ENCODE measurements at regions of chr1 and their contacts with region 1.

Region 1: DNA sequence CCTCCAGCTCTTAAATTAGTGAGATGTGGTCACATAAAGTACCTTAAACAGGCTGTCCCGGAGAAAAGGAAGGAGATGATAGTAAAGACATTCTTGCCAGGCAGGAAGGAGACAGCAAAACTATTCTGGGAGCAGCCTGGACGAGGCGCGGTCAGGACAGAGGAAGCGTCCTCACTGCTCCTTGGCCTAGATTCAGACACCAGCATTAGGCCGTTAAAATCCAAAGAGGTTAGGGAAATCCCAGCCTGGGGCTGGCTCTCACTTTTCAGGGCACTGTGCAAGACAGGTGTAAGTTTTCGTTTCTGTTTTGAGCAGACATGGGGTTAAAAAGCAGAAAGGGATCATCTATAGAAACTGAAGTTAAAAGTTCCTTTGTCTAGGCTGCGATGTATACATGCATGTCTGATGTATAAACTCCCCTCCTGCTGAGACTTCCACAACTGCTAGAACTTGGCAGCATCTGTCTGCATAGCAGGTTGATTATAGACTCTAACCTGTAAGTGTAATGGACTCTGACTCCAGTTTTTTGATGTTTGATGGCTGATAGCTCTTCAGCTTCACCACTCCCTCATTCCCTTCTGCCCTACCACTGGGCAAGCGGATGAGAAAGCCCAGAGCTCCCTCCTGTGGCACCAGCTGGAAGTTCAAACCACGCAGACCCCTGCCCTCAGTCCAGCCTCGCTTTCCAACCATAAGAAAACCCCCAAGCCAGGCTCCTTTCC is 21.5 kb downstream of the STPG1 start:
- DNase-seq: peak; percentile 80
- ATAC-seq: peak; percentile 73
- H3K4me3 Mint-ChIP-seq: peak overlapping the region; percentile 65
- H3K27ac Mint-ChIP-seq: peak overlapping the region; percentile 95
- H3K4me1 Mint-ChIP-seq: peaks cover 27% of the 10 kb centered on the region
- H3K27me3 Mint-ChIP-seq: no peaks in the 10 kb centered on the region

Region 2: GRCh38 chr1:24186993-24187805 is 204.8 kb before region 1 on chr1 and contains the start of gene IFNLR1:
- CTCF ChIA-PET with region 1: interaction called, 509 read pairs
- DNase-seq: peak; percentile 85
- ATAC-seq: peak; percentile 81
- H3K4me3 Mint-ChIP-seq: peak within 1 kb of the TSS; percentile 72
- H3K27ac Mint-ChIP-seq: peak within 1 kb of the TSS; percentile 65
- H3K4me1 Mint-ChIP-seq: peaks cover 49% of the 10 kb centered on the region
- H3K27me3 Mint-ChIP-seq: no peaks in the 10 kb centered on the region
- total RNA-seq, gene IFNLR1: 6.8 to 6.9 TPM

Region 3: GRCh38 chr1:24308365-24309015 is 83.6 kb before region 1 on chr1:
- CTCF ChIA-PET with region 1: interaction called, 15 read pairs
- DNase-seq: no peak
- ATAC-seq: no peak
- H3K4me3 Mint-ChIP-seq: no peak overlapping the region
- H3K27ac Mint-ChIP-seq: no peak overlapping the region
- H3K4me1 Mint-ChIP-seq: no peaks in the 10 kb centered on the region
- H3K27me3 Mint-ChIP-seq: peaks cover 32% of the 10 kb centered on the region

Region 4: DNA sequence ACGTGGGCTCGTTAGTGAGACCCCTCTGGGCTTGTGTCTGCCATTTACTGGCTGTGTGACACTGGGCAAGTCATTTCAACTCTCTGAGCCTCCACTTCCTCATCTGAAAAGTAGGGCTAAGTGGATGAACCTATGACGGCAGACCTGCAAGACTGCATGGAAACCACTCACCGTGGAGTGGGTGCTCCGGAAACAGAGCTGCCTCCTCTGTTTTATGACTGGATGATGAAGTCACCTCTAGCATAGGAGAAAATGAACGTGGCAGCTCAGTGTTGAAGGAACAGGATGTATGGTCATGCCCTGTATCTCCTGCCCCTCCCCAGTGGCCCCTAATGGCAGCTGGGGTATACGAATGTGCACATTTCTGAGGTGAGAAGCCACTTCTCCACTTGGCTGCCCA is 19.0 kb before region 1 on chr1:
- CTCF ChIA-PET with region 1: interaction called, 10 read pairs
- DNase-seq: no peak
- ATAC-seq: peak; percentile 53
- H3K4me3 Mint-ChIP-seq: no peak overlapping the region
- H3K27ac Mint-ChIP-seq: no peak overlapping the region
- H3K4me1 Mint-ChIP-seq: peaks cover 3% of the 10 kb centered on the region
- H3K27me3 Mint-ChIP-seq: no peaks in the 10 kb centered on the region

Region 5: DNA sequence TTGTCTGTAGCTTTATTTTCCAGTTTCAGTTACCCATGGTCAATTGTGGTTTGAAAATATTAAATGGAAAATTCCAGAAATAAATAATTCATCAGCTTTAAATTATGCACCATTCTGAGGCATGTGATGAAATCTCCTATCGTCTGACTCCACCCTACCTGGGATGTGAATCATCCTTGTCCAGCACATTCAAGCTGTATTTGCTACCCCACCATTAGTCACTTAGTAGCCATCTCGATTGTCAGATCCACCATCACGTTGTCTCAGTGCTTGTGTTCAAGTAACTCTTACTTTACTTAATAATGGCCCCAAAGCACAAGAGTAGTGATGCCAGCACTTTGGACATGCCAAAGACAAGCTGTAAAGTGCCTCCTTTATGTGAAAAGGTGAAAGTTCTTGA is 17.5 kb after region 1 on chr1:
- CTCF ChIA-PET with region 1: interaction called, 41 read pairs
- DNase-seq: peak; percentile 19
- ATAC-seq: no peak
- H3K4me3 Mint-ChIP-seq: no peak overlapping the region
- H3K27ac Mint-ChIP-seq: no peak overlapping the region
- H3K4me1 Mint-ChIP-seq: peaks cover 16% of the 10 kb centered on the region
- H3K27me3 Mint-ChIP-seq: no peaks in the 10 kb centered on the region

Region 6: DNA sequence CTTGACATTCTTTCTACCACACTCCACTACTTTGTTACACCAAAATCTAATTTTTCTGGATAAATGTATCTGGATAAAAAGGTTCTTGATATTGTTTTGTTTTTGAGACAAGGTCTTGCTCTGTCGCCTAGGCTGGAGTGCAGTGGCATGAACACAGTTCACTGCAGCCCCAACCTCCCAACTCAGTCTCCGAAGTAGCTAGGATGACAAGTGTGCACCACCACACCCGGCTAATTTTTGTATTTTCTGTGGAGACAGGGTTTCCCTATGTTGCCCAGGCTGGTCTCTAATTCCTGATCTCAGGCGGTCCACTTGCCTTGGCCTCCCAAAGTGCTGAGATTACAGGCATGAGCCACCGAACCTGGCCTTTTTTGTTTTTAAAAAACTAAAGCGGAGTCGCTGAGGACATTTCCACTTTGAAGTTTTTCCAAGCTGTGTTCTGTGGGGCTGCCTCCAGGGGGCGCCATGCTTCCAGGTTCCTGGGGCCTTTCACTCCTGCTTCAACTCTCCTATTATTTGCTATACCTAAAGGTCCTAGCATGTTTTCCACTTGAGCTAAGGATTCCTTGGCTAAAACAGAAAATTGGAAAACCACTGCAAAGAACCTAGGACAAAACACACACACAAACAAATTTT is 149.8 kb after region 1 on chr1:
- CTCF ChIA-PET with region 1: interaction called, 14 read pairs
- DNase-seq: peak; percentile 50
- ATAC-seq: no peak
- H3K4me3 Mint-ChIP-seq: no peak overlapping the region
- H3K27ac Mint-ChIP-seq: peak overlapping the region; percentile 81
- H3K4me1 Mint-ChIP-seq: peaks cover 56% of the 10 kb centered on the region
- H3K27me3 Mint-ChIP-seq: no peaks in the 10 kb centered on the region